H1 (cell line): ENCODE measurements at regions of chrX and their contacts with region 1.

Region 1: DNA sequence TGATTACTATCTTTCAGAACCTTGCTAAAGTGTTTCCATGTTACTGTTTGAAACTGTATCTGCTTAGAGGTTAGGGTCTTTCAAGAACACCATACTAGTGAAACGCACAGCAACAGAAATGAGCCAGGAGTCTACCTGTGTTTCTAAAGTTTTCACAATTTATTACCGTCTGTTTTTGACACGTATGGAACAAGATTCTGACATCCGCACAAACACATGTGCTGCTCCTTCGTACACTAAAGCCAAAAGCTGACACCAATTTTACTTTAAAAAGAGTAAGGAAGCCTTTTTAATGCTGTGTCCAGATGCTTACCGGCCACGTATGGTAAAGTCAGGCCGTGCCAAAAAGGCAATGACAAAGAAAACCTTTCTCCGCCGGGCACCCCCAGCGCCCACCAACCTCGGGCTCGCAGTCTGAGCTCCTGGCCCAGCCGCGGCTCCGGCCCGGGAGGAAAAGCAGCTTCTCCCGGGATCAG is 532 bp downstream of the RPS4X start:
- DNase-seq: no peak
- H3K4me3 ChIP-seq: peak overlapping the region; percentile 66 to 97 (median 84)
- H3K27ac ChIP-seq: peak overlapping the region; percentile 79; the same call in 1 of the 2 replicates
- H3K4me1 ChIP-seq: peaks cover 0 to 6% (median 0%) of the 10 kb centered on the region in 4 experiments; a peak in 2 of 7 replicates
- H3K27me3 ChIP-seq: no peaks in the 10 kb centered on the region
- CTCF ChIP-seq: no peak
- EP300 ChIP-seq: no peak
- POLR2A ChIP-seq: no peak
- RAD21 ChIP-seq: no peak

Region 2: DNA sequence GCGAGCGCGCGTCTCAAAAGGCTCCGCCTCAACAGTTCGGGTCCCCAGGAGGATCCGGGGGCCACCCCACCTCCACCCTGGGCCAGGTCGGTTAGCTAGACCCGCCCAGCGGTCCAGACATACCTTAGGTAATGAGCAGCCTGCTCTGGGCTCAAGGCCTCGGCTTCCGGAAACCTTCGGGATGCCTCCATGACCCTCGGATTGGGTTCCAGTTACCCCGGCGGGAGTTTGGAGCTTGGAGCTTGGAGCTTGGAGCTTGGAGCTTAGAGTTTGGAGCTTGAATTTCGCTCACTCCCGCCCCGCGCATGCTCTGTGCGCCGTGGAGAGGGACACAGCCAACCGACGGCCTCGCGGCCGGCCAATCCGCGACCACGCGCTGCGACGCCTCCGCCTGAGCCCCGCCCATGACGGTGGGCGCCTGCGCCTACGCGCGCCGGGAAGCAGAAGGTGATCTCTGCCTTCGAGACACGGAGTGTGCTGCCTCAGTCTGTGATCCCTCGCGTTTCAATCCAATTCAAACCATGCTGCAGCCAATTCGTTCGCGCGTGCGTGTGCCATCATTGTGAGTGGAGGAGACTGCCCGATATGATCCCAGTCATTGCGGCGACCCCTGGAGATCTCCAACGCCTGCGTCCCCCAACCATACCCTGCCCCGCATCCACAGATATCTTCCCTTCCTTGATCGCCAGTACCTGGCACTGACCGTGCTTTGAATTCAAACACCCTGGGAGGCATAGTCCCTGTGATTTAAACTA is 37.6 kb before region 1 on chrX and contains the start of gene ERCC6L:
- CTCF ChIA-PET with region 1: interaction called, 8 read pairs
- POLR2A ChIA-PET with region 1: interaction called, 27 read pairs
- DNase-seq: peak; percentile 72 to 84
- H3K4me3 ChIP-seq: peak within 1 kb of the TSS; percentile 69 to 84 (median 74)
- H3K27ac ChIP-seq: peak within 1 kb of the TSS; percentile 20; the same call in 1 of the 2 replicates
- H3K4me1 ChIP-seq: no peaks in the 10 kb centered on the region; a peak in 1 of 7 replicates
- H3K27me3 ChIP-seq: no peaks in the 10 kb centered on the region
- CTCF ChIP-seq: no peak
- EP300 ChIP-seq: no peak
- POLR2A ChIP-seq: peak; percentile 76 to 93
- RAD21 ChIP-seq: no peak
- total RNA-seq, gene ERCC6L: 23.9 and 24.7 TPM in 2 replicates

Region 3: GRCh38 chrX:72245461-72246089 is 30.9 kb before region 1 on chrX:
- CTCF ChIA-PET with region 1: interaction called, 10 read pairs
- POLR2A ChIA-PET with region 1: interaction called, 27 read pairs
- DNase-seq: peak in 1 of 2 experiments; percentile 80
- H3K4me3 ChIP-seq: no peak overlapping the region
- H3K27ac ChIP-seq: no peak overlapping the region
- H3K4me1 ChIP-seq: no peaks in the 10 kb centered on the region
- H3K27me3 ChIP-seq: no peaks in the 10 kb centered on the region
- CTCF ChIP-seq: peak; percentile 69 to 82 (median 74)
- EP300 ChIP-seq: no peak
- POLR2A ChIP-seq: no peak
- RAD21 ChIP-seq: peak; percentile 79 to 86

Region 4: DNA sequence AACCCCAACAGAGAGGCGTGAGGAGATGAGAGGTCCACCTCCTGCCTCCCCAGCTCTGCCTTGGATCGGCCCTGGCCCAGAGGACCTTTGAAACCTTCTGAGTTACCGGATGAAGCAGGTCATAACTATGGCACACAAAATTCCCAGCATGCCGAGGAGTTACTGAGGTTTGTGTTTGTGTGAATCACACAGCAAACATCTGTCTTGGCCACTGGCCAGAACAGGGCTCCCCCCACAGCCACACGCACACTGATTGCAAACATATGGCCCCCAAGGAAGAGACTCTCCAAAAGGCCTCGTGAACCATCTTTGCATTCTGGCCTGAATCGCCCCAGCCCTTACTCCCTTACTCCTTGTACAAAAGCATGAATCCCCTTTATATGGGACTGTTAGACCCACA is 18.3 kb before region 1 on chrX:
- CTCF ChIA-PET with region 1: interaction called, 3 read pairs
- POLR2A ChIA-PET with region 1: interaction called, 23 read pairs
- DNase-seq: no peak
- H3K4me3 ChIP-seq: no peak overlapping the region
- H3K27ac ChIP-seq: no peak overlapping the region
- H3K4me1 ChIP-seq: peaks cover 0 to 3% (median 2%) of the 10 kb centered on the region in 4 experiments; a peak in 2 of 7 replicates
- H3K27me3 ChIP-seq: no peaks in the 10 kb centered on the region
- CTCF ChIP-seq: no peak
- EP300 ChIP-seq: no peak
- POLR2A ChIP-seq: no peak
- RAD21 ChIP-seq: no peak

Region 5: GRCh38 chrX:72306851-72307645 is 30.5 kb after region 1 on chrX:
- CTCF ChIA-PET with region 1: no interaction called
- POLR2A ChIA-PET with region 1: interaction called, 10 read pairs
- DNase-seq: no peak
- H3K4me3 ChIP-seq: peak overlapping the region; percentile 48 to 60 (median 52)
- H3K27ac ChIP-seq: no peak overlapping the region
- H3K4me1 ChIP-seq: peaks cover 0 to 6% (median 0%) of the 10 kb centered on the region in 4 experiments; a peak in 2 of 7 replicates
- H3K27me3 ChIP-seq: peaks cover 40 to 77% (median 69%) of the 10 kb centered on the region in 4 experiments
- CTCF ChIP-seq: no peak
- EP300 ChIP-seq: no peak
- POLR2A ChIP-seq: no peak
- RAD21 ChIP-seq: no peak